Activated CD4-positive, alpha-beta T cell treated with anti-CD3 and anti-CD28 coated beads, Interleukin-2, amount 10 ng/mL, durations not matched to agents 24 days and 14 days (primary cell): ENCODE measurements at regions of chr2 and their contacts with region 1.

Region 1: DNA sequence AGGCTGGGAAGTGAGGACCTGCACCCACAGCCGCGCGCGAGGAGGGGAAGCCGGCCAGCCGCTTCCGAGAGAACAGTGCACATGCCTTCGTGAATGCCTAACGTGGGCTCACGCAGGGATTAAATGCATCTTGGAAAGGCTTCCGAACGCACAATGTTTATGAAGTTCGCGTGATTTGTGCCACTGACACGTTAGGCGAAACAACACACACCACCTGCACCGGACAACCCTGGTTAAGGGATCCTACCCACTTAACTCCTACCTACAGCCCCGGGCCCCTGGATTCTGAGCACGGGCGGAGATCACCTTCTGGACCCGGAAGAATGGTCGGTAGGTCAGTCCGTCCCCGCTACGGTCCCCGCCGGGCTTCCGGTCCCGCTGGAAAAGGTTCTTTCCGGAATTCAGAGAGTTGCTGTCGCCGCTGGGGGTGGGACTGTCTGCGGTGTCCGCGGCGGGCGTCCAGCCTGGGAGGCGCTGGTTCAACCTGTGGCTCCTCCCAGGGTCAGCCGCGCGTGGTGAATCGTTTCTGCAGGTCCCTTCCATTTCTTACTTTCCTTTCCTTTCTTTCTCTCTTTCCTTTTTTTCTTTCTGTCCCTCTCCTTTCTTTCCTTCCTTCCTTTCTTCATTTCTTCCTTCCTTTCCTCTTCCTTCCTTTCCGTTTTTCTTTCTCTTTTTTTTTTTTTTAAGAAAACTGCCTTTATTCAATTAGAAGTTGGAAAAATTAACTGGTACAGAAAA is at the start of gene MTIF2:
- DNase-seq: peak; percentile 97
- H3K4me3 Mint-ChIP-seq: peak within 1 kb of the TSS; percentile 96
- H3K27ac Mint-ChIP-seq: peak within 1 kb of the TSS; percentile 95
- H3K4me1 Mint-ChIP-seq: peaks cover 7% of the 10 kb centered on the region
- H3K27me3 Mint-ChIP-seq: peaks cover 4% of the 10 kb centered on the region
- total RNA-seq, gene MTIF2: 45.7 and 47.1 TPM in 2 replicates

Region 2: DNA sequence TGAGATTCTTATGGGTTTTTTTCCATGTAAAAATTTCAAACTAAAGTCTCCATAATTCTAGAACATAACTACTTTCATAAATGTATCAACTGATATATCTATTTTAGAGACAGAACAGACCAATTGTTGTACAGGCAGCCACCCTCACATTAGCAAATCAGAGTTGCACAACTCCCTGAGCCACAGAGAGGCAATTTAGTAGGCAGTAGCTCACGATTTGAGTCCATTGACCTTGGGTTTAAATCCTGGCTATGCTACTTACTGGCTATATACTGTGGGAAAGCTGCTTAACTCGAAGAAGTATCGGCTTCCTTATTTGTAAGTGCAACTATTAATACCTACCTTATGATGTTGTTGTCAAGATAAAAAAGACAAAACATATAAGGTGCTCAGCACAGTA is 16.2 kb before region 1 on chr2:
- intact Hi-C with region 1: no loop called
- DNase-seq: no peak
- H3K4me3 Mint-ChIP-seq: no peak overlapping the region
- H3K27ac Mint-ChIP-seq: no peak overlapping the region
- H3K4me1 Mint-ChIP-seq: no peaks in the 10 kb centered on the region
- H3K27me3 Mint-ChIP-seq: no peaks in the 10 kb centered on the region

Region 3: DNA sequence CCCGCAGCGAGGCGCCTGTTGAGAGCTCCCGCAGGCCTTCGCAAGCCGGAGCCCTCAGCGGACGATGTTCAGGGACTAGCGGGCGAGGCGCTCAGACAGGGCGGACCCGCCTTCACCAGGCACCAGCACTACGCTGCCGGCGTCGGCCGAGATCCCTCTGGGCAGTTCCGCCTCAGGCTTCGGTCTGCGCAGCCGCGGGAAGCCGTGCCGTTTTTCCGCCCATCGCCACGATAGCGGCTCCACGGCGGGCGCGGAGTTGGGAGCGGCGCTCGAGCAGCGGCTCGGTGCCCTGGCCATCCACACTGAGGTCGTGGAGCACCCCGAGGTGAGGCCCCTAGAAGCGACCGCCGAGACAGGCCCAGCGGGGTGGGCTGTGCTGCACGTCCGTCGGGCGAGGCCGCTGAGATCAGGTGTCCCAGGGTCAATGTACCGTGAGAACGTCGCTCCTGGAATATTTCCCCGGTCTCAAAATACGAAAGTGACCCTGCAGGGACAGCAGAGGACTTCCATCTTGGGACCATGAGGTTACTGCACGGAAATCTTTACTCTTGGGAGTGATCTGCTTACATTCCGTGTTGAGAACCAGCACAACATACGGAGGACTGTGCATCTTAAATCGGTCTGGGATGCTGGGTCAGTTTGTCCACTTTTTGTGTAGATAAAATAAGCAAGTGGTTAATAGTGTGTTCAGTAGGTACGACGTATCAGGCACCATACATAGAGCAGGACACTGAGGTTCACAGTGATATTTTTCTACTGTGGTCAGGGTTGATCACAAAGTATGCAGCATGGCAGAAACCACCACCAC is 13.2 kb after region 1 on chr2:
- intact Hi-C with region 1: loop called (anchors 1 kb)
- DNase-seq: peak; percentile 97
- H3K4me3 Mint-ChIP-seq: peak overlapping the region; percentile 92
- H3K27ac Mint-ChIP-seq: peak overlapping the region; percentile 94
- H3K4me1 Mint-ChIP-seq: peaks cover 9% of the 10 kb centered on the region
- H3K27me3 Mint-ChIP-seq: no peaks in the 10 kb centered on the region

Region 4: GRCh38 chr2:55345064-55345463 is 76.0 kb after region 1 on chr2:
- intact Hi-C with region 1: no loop called
- DNase-seq: no peak
- H3K4me3 Mint-ChIP-seq: no peak overlapping the region
- H3K27ac Mint-ChIP-seq: no peak overlapping the region
- H3K4me1 Mint-ChIP-seq: no peaks in the 10 kb centered on the region
- H3K27me3 Mint-ChIP-seq: no peaks in the 10 kb centered on the region

Region 5: GRCh38 chr2:55419679-55420438 is 150.8 kb after region 1 on chr2 and contains the start of gene CCDC88A:
- intact Hi-C with region 1: loop called (anchors 1 kb)
- DNase-seq: peak; percentile 95
- H3K4me3 Mint-ChIP-seq: peak within 1 kb of the TSS; percentile 90
- H3K27ac Mint-ChIP-seq: peak within 1 kb of the TSS; percentile 70
- H3K4me1 Mint-ChIP-seq: peaks cover 17% of the 10 kb centered on the region
- H3K27me3 Mint-ChIP-seq: peaks cover 37% of the 10 kb centered on the region
- total RNA-seq, gene CCDC88A: 9.5 and 9.8 TPM in 2 replicates